ENCODE measurements at regions of chr3 and their contacts with region 1.

Region 1: DNA sequence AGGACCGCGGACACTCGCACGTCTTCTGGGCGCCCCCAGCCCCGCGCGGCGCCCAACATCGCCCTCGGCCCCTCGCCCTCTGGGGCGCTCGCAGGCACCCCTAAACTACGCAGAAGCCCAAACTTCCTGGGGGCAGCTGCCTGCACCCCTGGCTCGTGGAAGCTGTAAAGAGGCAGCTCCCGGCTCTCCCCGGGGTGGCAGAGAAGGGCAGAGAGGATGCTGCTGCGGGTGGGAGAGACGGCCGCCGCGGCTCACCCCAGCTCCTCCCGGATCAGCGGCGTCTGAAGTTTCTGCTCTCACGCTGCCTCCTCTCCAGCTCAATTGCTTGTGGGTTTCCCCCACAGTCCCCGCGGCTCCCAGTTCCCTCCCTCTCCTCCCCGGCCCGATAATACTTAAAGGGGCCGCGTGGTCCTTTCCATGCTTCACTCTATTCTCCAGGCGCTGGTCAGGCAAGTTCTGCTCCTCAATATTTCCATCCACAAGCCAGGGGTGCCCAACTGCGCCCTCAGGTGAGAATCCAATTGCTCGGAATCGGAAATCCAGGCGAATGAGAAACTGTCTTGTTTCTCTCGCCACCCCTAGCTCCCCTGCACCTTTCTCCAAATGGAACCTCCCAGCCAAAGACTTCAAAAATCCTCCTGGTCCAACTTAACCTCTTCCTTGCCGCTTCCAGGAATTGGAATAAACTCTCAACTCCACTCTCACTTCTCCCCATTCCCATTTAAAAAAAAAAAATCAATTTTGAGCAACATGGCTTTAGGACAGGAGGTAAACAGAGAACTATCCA is 748.5 kb downstream of the ROBO1 start:
- DNase-seq: peak; percentile 64 to 82
- H3K4me3 ChIP-seq: peak overlapping the region; percentile 40
- H3K4me3 Mint-ChIP-seq: no peak overlapping the region
- H3K27ac Mint-ChIP-seq: peak overlapping the region; percentile 61
- H3K4me1 ChIP-seq: peaks cover 5% of the 10 kb centered on the region; the same call in 1 of the 2 replicates
- H3K4me1 Mint-ChIP-seq: no peaks in the 10 kb centered on the region
- H3K27me3 ChIP-seq: no peaks in the 10 kb centered on the region
- H3K27me3 Mint-ChIP-seq: no peaks in the 10 kb centered on the region
- CTCF ChIP-seq: no peak

Region 2: GRCh38 chr3:78857494-78858111 is 161.7 kb before region 1 on chr3:
- CTCF ChIA-PET with region 1: no interaction called
- POLR2A ChIA-PET with region 1: no interaction called
- intact Hi-C with region 1: loop called (anchors 2 kb)
- DNase-seq: peak in 1 of 2 experiments; percentile 11
- H3K4me3 ChIP-seq: no peak overlapping the region
- H3K4me3 Mint-ChIP-seq: no peak overlapping the region
- H3K27ac Mint-ChIP-seq: no peak overlapping the region
- H3K4me1 ChIP-seq: no peaks in the 10 kb centered on the region
- H3K4me1 Mint-ChIP-seq: no peaks in the 10 kb centered on the region
- H3K27me3 ChIP-seq: no peaks in the 10 kb centered on the region
- H3K27me3 Mint-ChIP-seq: no peaks in the 10 kb centered on the region
- CTCF ChIP-seq: no peak

Measured in Caco-2 (cell line).